Activated CD4-positive, alpha-beta memory T cell treated with anti-CD3 and anti-CD28 coated beads for 36 hours (primary cell): ENCODE measurements at regions of chr9 and their contacts with region 1.

Region 1: GRCh38 chr9:109469646-109470358 is 28.3 kb downstream of the PTPN3 start:
- DNase-seq: peak; percentile 82
- H3K4me3 Mint-ChIP-seq: no peak overlapping the region
- H3K27ac Mint-ChIP-seq: no peak overlapping the region
- H3K4me1 Mint-ChIP-seq: no peaks in the 10 kb centered on the region
- H3K27me3 Mint-ChIP-seq: peaks cover 11% of the 10 kb centered on the region

Region 2: GRCh38 chr9:109150925-109151545 is 318.8 kb before region 1 on chr9:
- CTCF ChIA-PET with region 1: no interaction called
- POLR2A ChIA-PET with region 1: no interaction called
- intact Hi-C with region 1: no loop called
- DNase-seq: no peak
- H3K4me3 Mint-ChIP-seq: no peak overlapping the region
- H3K27ac Mint-ChIP-seq: no peak overlapping the region
- H3K4me1 Mint-ChIP-seq: no peaks in the 10 kb centered on the region
- H3K27me3 Mint-ChIP-seq: no peaks in the 10 kb centered on the region

Region 3: DNA sequence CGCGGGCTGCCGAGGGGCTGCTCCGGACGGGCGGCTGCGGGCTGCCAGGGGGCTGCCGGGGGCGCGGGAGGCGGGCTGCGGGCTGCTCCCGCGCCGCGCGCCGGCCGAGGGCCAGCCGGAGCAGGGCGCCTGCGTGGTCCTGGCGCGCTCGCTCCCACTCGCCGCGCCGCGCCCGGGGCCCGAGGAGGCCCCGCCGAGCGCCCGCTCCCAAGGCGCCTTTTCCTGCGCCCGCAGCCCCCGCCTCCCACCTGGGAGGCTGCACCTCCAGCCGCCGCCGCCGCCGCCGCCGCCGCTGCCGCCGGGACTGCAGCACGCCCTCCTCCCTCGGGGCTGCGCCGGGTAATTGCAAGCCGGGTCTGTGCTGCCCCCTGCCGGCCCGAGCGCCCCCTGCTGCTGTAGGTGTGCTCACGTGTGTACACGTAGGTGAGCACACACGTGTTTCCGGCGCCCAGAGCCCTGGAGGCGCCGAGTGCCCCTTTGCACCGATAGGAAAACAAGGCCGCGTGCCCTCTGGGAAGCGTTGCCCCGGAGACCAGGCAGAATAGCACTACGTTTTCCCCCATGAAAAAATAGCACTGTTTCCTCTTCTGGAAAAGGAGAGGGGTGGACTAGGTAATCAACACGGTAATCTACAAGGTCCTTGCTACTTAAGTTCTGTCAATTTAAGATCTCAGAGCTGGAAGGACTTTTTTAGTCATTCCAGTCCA is 148.9 kb before region 1 on chr9 and contains the start of gene EPB41L4B:
- CTCF ChIA-PET with region 1: no interaction called
- POLR2A ChIA-PET with region 1: no interaction called
- intact Hi-C with region 1: loop called (anchors 5 kb)
- DNase-seq: peak; percentile 93
- H3K4me3 Mint-ChIP-seq: peak within 1 kb of the TSS; percentile 60
- H3K27ac Mint-ChIP-seq: no peak within 1 kb of the TSS
- H3K4me1 Mint-ChIP-seq: peaks cover 8% of the 10 kb centered on the region
- H3K27me3 Mint-ChIP-seq: peaks cover 48% of the 10 kb centered on the region
- total RNA-seq, gene EPB41L4B: 0.17 to 0.21 TPM

Region 4: DNA sequence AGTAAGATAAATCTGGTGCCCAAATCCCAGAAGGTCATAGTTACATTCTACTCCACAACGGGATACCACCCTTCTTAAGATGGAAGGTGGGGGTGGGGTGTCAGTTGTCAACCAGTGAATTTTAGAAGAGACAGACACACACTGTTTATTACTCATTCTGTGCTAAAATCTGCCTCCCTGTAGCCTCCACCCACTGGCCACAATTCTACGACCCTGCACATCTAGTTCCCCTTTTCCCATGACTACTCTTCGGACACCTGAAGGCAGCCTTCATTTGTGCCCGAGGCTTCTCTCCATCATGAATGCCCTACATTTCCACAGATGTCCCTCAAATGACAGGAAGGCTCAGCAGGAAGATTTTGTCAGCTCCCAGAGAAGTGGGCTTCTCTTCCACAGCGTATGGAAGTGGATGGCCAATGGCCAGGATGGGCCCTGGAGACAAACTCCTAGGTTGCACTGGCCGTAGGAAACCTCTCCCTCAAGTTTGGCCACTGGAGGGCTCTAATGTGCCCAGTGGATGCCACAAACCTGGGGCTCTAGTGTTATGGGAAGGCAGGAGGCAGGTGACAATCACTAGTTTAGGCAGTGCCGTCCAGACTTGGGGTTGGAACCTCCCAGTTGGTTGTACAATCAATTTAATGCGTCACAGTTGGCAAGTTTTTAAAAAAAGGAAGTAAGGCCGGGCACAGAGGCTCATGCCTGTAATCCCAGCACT is 18.3 kb before region 1 on chr9:
- CTCF ChIA-PET with region 1: interaction called, 12 read pairs
- POLR2A ChIA-PET with region 1: no interaction called
- intact Hi-C with region 1: no loop called
- DNase-seq: no peak
- H3K4me3 Mint-ChIP-seq: no peak overlapping the region
- H3K27ac Mint-ChIP-seq: no peak overlapping the region
- H3K4me1 Mint-ChIP-seq: peaks cover 15% of the 10 kb centered on the region
- H3K27me3 Mint-ChIP-seq: peaks cover 25% of the 10 kb centered on the region

Region 5: DNA sequence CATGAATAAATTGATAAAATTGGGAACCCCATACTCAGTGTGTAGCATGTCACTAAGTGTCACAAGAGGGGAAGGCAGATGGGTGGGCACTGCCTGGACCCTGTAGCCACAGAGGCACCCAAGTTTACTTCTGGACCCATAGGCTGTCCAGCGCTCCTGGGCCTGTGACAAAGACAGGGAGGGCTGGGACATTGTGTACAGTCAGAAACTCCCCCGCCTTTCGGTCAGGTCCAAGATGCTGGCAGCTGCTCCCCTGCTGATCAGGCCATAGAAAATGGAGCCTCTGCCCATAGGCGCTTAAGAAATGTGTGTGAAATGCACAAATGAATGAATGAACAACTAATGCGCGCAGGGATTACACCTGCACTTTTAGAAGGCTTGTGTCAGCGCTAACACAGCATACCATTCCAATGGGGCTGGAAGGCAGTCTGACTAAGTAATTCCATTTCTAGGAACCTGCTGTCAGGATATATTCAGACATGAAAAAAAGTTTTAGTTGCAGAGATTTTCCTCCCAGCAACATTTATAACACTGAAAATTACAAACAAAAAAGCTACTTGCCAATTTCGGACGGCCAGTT is 12.0 kb after region 1 on chr9:
- CTCF ChIA-PET with region 1: interaction called, 10 read pairs
- POLR2A ChIA-PET with region 1: no interaction called
- intact Hi-C with region 1: no loop called
- DNase-seq: no peak
- H3K4me3 Mint-ChIP-seq: no peak overlapping the region
- H3K27ac Mint-ChIP-seq: no peak overlapping the region
- H3K4me1 Mint-ChIP-seq: no peaks in the 10 kb centered on the region
- H3K27me3 Mint-ChIP-seq: peaks cover 18% of the 10 kb centered on the region